Activated B cell treated with CpG ODN at 0.5 μM for 24 hours (primary cell): ENCODE measurements at regions of chr3 and their contacts with region 1.

Region 1: GRCh38 chr3:194070634-194071409 is 65.1 kb upstream of the HES1 start:
- DNase-seq: peak; percentile 93
- ATAC-seq: peak; percentile 93
- H3K4me3 Mint-ChIP-seq: peak overlapping the region; percentile 76
- H3K27ac Mint-ChIP-seq: peak overlapping the region; percentile 84
- H3K4me1 Mint-ChIP-seq: peaks cover 41% of the 10 kb centered on the region
- H3K27me3 Mint-ChIP-seq: no peaks in the 10 kb centered on the region
- CTCF ChIP-seq: no peak

Region 2: GRCh38 chr3:193842029-193842798 is 228.6 kb before region 1 on chr3:
- CTCF ChIA-PET with region 1: no interaction called
- POLR2A ChIA-PET with region 1: interaction called, 3 read pairs
- intact Hi-C with region 1: loop called (anchors 2 kb)
- DNase-seq: peak; percentile 24
- ATAC-seq: peak; percentile 91
- H3K4me3 Mint-ChIP-seq: peak overlapping the region; percentile 72
- H3K27ac Mint-ChIP-seq: peak overlapping the region; percentile 81
- H3K4me1 Mint-ChIP-seq: peaks cover 42% of the 10 kb centered on the region
- H3K27me3 Mint-ChIP-seq: peaks cover 2% of the 10 kb centered on the region
- CTCF ChIP-seq: no peak

Region 3: GRCh38 chr3:194046995-194047645 is 23.7 kb before region 1 on chr3:
- CTCF ChIA-PET with region 1: interaction called, 3 read pairs
- POLR2A ChIA-PET with region 1: no interaction called
- intact Hi-C with region 1: loop called (anchors 2 kb)
- DNase-seq: no peak
- ATAC-seq: peak; percentile 62
- H3K4me3 Mint-ChIP-seq: no peak overlapping the region
- H3K27ac Mint-ChIP-seq: peak overlapping the region; percentile 33
- H3K4me1 Mint-ChIP-seq: peaks cover 33% of the 10 kb centered on the region
- H3K27me3 Mint-ChIP-seq: no peaks in the 10 kb centered on the region
- CTCF ChIP-seq: no peak

Region 4: GRCh38 chr3:194084284-194084683 is 13.5 kb after region 1 on chr3:
- CTCF ChIA-PET with region 1: no interaction called
- POLR2A ChIA-PET with region 1: interaction called, 20 read pairs
- intact Hi-C with region 1: loop called (anchors 1 kb)
- DNase-seq: no peak
- ATAC-seq: peak; percentile 60
- H3K4me3 Mint-ChIP-seq: no peak overlapping the region
- H3K27ac Mint-ChIP-seq: no peak overlapping the region
- H3K4me1 Mint-ChIP-seq: peaks cover 16% of the 10 kb centered on the region
- H3K27me3 Mint-ChIP-seq: no peaks in the 10 kb centered on the region
- CTCF ChIP-seq: no peak

Region 5: GRCh38 chr3:194141415-194142155 is 70.8 kb after region 1 on chr3:
- CTCF ChIA-PET with region 1: interaction called, 6 read pairs
- POLR2A ChIA-PET with region 1: interaction called, 88 read pairs
- intact Hi-C with region 1: loop called (anchors 1 kb)
- DNase-seq: peak; percentile 50
- ATAC-seq: peak; percentile 27
- H3K4me3 Mint-ChIP-seq: peak overlapping the region; percentile 76
- H3K27ac Mint-ChIP-seq: peak overlapping the region; percentile 57
- H3K4me1 Mint-ChIP-seq: peaks cover 44% of the 10 kb centered on the region
- H3K27me3 Mint-ChIP-seq: peaks cover 6% of the 10 kb centered on the region
- CTCF ChIP-seq: no peak